ENCODE measurements at regions of chr18 and their contacts with region 1.

Region 1: GRCh38 chr18:12271376-12272235 is 17.4 kb downstream of the CIDEA start:
- DNase-seq: no peak
- H3K4me3 ChIP-seq: peak overlapping the region; percentile 39
- H3K27me3 ChIP-seq: peaks cover 3% of the 10 kb centered on the region; the same call in 1 of the 2 replicates
- CTCF ChIP-seq: peak; percentile 71; the same call in 1 of the 2 replicates

Region 2: DNA sequence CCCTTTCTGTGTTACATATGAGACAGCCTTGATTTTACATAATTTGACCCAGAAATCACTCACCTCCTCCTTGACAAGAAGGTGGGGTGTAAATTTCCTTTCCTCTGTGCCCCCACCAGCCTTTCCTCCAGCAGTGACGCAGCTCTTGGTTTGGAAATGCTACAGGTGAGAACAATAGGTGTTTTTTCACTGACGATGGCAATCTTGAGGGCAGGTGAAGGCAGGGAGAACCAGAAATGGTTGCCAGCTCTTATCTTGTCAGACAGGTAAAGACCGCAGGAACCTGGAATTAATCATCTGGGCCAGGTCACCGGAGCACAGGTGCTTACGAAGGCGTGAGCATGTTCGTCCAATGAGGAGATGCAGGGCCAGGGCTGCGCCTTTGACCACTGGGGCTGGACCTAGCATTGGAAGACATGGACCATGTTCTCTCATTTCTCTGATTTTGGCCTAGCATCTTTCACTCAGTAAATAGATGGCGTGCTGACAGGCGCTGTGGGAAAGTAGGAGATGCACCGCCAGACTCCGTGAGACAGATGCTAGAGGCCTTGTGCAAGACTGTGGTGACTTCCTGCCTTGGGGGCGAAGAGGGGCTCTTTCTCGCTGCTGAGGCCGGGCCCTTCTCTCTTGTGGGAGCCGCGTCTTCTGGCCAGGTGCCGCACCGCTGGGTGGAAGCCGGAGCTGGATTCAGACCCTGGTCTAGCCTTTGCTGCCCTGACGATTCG is 13.4 kb before region 1 on chr18:
- CTCF ChIA-PET with region 1: interaction called, 24 read pairs
- POLR2A ChIA-PET with region 1: interaction called, 3 read pairs
- DNase-seq: no peak
- H3K4me3 ChIP-seq: no peak overlapping the region
- H3K27me3 ChIP-seq: peaks cover 20% of the 10 kb centered on the region
- CTCF ChIP-seq: no peak

Region 3: GRCh38 chr18:12317664-12318333 is 46.2 kb after region 1 on chr18:
- CTCF ChIA-PET with region 1: interaction called, 12 read pairs
- POLR2A ChIA-PET with region 1: interaction called, 12 read pairs
- DNase-seq: peak; percentile 64
- H3K4me3 ChIP-seq: no peak overlapping the region
- H3K27me3 ChIP-seq: no peaks in the 10 kb centered on the region
- CTCF ChIP-seq: no peak

Region 4: DNA sequence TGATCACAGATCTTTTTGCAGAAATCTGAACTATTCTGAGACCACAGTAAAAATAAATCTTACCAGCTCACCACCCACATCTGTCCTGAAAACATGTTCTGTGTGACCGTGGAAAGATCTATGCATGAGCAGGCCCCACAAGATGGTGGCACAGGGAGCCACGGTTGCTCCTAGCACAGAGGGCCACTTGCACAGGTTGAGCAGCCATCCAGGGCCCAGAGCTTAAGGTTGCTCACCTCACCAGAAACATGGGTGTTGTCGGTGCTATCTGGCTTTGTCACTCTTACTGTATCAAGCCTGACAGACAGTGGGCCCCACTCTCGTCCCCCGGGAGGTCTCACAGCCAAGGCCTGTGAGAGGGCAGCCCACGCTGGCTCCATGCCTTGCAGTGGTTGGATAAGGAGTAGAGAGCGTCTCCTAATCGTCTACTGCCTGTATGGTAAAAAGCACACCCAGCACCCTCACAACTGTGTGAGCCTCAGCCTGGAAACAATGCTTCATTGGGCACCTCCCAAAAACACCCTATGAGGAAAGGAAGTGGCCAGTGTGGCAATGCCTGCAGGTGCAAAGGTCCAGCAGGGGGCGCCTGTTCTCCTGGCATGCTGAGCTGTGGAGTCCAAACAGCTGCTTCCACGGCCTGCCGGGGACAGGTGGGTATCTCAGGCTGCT is 56.0 kb after region 1 on chr18:
- CTCF ChIA-PET with region 1: interaction called, 15 read pairs
- POLR2A ChIA-PET with region 1: interaction called, 7 read pairs
- DNase-seq: no peak
- H3K4me3 ChIP-seq: no peak overlapping the region
- H3K27me3 ChIP-seq: no peaks in the 10 kb centered on the region
- CTCF ChIP-seq: peak; percentile 91